Pancreas (tissue), 10 donors: ENCODE measurements at regions of chr5 and their contacts with region 1.

Region 1: GRCh38 chr5:53481887-53482716 is 1.7 kb downstream of the FST start:
- DNase-seq: peak; percentile 46 to 87 (median 64)
- ATAC-seq: peak; percentile 59 to 81 (median 71)
- H3K4me3 ChIP-seq: peak overlapping the region; percentile 17 to 57 (median 34)
- H3K27ac ChIP-seq: no peak overlapping the region
- H3K4me1 ChIP-seq: peaks cover 0 to 9% (median 0%) of the 10 kb centered on the region in 3 donors
- H3K27me3 ChIP-seq: no peaks in the 10 kb centered on the region
- CTCF ChIP-seq: peak in 2 of 4 donors; percentile 24 to 27

Region 2: DNA sequence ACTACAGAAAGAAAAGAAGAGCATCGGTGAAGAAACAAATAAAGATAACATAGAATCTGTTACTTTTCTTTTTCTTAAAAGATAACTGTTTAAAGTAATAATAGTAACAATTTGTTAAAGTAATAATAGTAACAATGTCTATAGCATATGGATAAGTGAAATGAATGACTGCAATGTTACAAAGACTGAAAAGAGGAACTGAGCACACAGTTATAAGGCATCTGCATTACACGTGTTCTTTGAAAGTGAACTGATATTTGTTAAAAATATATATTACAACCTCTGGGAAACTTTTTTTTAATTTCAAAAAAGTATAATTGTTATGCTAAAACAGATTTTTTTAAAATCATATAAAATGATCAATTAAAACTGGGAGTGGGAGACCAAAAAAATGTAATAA is 90.0 kb before region 1 on chr5:
- intact Hi-C with region 1: no loop called
- DNase-seq: no peak
- ATAC-seq: no peak
- H3K4me3 ChIP-seq: no peak overlapping the region
- H3K27ac ChIP-seq: no peak overlapping the region
- H3K4me1 ChIP-seq: no peaks in the 10 kb centered on the region
- H3K27me3 ChIP-seq: no peaks in the 10 kb centered on the region
- CTCF ChIP-seq: no peak

Region 3: DNA sequence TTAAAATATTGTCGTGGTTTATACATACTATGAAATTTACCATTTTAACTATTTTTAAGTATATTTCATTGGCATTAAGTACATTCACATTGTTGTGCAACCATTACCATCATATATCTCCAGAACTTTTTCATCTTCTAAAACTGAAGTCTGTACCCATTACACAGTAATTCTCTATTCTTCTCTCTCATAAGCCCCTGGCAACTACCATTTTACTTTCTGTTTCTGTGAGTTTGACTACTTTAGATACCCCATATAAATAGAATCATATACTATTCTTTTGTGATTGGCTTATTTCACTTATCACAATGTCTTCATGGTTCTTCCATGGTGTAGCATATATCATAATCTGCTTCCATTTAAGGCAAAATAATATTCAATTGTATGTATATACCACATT is 108.7 kb after region 1 on chr5:
- intact Hi-C with region 1: no loop called
- DNase-seq: no peak
- ATAC-seq: no peak
- H3K4me3 ChIP-seq: no peak overlapping the region
- H3K27ac ChIP-seq: no peak overlapping the region
- H3K4me1 ChIP-seq: peaks cover 0 to 14% (median 12%) of the 10 kb centered on the region in 3 donors
- H3K27me3 ChIP-seq: no peaks in the 10 kb centered on the region
- CTCF ChIP-seq: no peak

Region 4: DNA sequence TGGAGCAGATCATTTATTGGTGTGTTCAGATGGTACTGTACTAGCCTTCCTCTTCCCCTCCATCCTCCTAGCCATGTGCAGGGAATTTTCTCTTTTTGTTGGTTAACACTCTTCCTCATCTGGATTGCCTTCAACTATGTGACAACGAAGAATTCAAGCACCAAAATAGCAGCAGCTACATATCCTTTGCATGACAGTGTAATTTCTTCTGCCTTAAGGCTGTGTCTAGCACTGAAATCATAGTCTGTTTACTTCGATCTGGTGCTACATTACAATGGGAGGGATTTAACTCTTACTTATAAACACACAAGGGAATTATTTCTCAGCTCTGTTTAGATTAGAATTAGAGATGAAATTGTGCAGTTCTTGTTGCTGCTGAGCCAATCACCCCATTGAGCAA is 567.9 kb after region 1 on chr5:
- intact Hi-C with region 1: loop called in 1 of 3 experiments (anchors 5 kb)
- DNase-seq: no peak
- ATAC-seq: no peak
- H3K4me3 ChIP-seq: no peak overlapping the region
- H3K27ac ChIP-seq: no peak overlapping the region
- H3K4me1 ChIP-seq: peaks cover 5 to 19% (median 14%) of the 10 kb centered on the region in 3 donors
- H3K27me3 ChIP-seq: no peaks in the 10 kb centered on the region
- CTCF ChIP-seq: no peak

Region 5: DNA sequence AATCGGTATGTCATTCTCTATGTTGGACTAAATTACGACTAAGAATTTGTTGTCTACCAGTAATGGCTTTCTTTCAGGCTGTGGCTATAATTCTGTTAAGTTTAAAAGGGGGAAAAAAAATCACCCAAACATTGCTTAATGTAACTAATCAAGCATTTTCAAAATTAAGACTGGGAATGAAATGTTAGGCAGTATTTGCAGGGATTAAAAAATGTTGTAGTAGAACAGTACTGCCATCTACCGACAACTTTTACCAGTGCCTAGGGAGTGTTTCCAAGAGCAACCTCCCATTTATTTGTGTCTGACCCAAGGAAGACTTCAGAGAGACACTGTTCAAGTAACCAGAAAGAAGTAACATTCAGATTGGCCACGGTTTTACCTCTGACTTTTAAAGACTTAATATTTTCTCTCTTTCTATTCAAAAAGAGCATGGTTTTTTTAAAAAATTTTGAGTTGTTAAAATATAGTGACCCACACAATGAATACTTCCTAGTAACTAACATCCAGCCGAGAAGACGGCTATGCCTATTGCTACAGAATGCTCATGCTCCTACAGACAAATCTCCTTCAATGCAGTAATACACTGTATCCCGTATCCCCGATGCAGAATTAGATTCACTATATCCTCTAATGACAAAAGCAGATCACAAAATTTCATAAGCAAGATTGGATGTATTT is 735.9 kb after region 1 on chr5:
- intact Hi-C with region 1: loop called in 1 of 3 experiments (anchors 5 kb)
- DNase-seq: peak in 3 of 6 donors; percentile 11 to 61 (median 36)
- ATAC-seq: peak; percentile 84 to 91 (median 91)
- H3K4me3 ChIP-seq: no peak overlapping the region
- H3K27ac ChIP-seq: no peak overlapping the region
- H3K4me1 ChIP-seq: no peaks in the 10 kb centered on the region
- H3K27me3 ChIP-seq: no peaks in the 10 kb centered on the region
- CTCF ChIP-seq: peak; percentile 44 to 71 (median 59)

Region 6: GRCh38 chr5:54229041-54229780 is 747.1 kb after region 1 on chr5:
- intact Hi-C with region 1: loop called in 1 of 3 experiments (anchors 5 kb)
- DNase-seq: peak; percentile 47 to 93 (median 75)
- ATAC-seq: peak; percentile 89 to 98 (median 94)
- H3K4me3 ChIP-seq: no peak overlapping the region
- H3K27ac ChIP-seq: no peak overlapping the region
- H3K4me1 ChIP-seq: no peaks in the 10 kb centered on the region
- H3K27me3 ChIP-seq: no peaks in the 10 kb centered on the region
- CTCF ChIP-seq: peak; percentile 87 to 95 (median 90)